ENCODE measurements at regions of chr1 and their contacts with region 1.

Region 1: GRCh38 chr1:179129702-179130473 is 48.0 kb downstream of the TOR3A start:
- DNase-seq: peak; percentile 27
- H3K4me3 Mint-ChIP-seq: peak overlapping the region; percentile 59
- H3K27ac Mint-ChIP-seq: peak overlapping the region; percentile 82
- H3K4me1 Mint-ChIP-seq: peaks cover 24% of the 10 kb centered on the region
- H3K27me3 Mint-ChIP-seq: no peaks in the 10 kb centered on the region

Region 2: DNA sequence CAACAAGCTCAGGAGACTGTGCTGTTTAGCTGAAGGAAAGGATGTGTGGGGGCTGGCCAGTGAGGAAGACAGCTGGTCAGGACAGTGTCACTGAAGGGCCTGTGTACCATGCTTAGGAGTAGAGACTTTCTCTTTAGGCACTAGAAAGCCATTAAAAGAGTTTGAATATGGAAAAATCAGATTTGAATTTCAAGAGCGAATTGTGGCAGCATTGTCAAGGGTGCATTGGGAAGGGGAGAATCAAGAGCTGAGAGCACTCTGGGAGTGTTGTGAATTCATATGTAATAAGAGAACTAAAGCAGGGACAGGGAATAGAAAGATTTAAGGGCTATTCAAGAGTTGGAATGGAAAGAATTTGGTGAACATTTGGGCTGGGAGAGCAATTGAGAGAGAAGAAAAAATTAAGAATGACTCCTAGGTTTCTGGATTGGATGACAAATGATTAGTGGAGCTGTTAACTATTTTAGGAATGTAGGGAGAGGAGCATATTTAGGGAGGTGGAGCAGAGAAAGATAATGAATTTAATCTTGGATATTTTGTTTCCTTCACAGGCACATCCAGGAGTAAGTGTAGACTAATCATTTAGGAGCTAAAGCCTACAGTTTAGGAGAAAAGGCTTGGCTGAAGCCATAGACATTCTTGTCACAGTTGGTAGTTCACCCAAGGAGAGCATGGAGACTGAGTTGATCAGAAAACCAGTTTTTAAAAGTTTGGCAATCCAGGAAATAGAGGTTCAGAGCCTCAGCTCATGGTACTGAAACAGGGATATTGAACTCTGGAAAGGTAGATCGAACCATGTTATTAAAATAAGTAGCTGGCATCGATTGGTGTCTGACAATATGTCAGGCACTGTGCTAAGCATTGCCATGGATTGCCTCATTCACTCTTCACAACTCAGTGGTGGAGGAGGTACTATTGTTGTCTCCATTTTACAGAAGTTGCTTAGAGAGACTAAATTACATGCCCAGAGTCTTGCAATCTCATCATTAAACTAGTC is 71.1 kb before region 1 on chr1:
- CTCF ChIA-PET with region 1: no interaction called
- POLR2A ChIA-PET with region 1: no interaction called
- intact Hi-C with region 1: no loop called
- DNase-seq: no peak
- H3K4me3 Mint-ChIP-seq: no peak overlapping the region
- H3K27ac Mint-ChIP-seq: no peak overlapping the region
- H3K4me1 Mint-ChIP-seq: no peaks in the 10 kb centered on the region
- H3K27me3 Mint-ChIP-seq: no peaks in the 10 kb centered on the region

Region 3: GRCh38 chr1:179142889-179143299 is 13.0 kb after region 1 on chr1:
- CTCF ChIA-PET with region 1: no interaction called
- POLR2A ChIA-PET with region 1: interaction called, 3 read pairs
- intact Hi-C with region 1: loop called (anchors 1 kb)
- DNase-seq: no peak
- H3K4me3 Mint-ChIP-seq: no peak overlapping the region
- H3K27ac Mint-ChIP-seq: no peak overlapping the region
- H3K4me1 Mint-ChIP-seq: peaks cover 26% of the 10 kb centered on the region
- H3K27me3 Mint-ChIP-seq: no peaks in the 10 kb centered on the region

Region 4: GRCh38 chr1:179322557-179322956 is 192.7 kb after region 1 on chr1:
- CTCF ChIA-PET with region 1: no interaction called
- POLR2A ChIA-PET with region 1: no interaction called
- intact Hi-C with region 1: loop called (anchors 1 kb)
- DNase-seq: no peak
- H3K4me3 Mint-ChIP-seq: no peak overlapping the region
- H3K27ac Mint-ChIP-seq: no peak overlapping the region
- H3K4me1 Mint-ChIP-seq: peaks cover 33% of the 10 kb centered on the region
- H3K27me3 Mint-ChIP-seq: no peaks in the 10 kb centered on the region

Measured in activated CD4-positive, alpha-beta memory T cell treated with anti-CD3 and anti-CD28 coated beads for 36 hours (primary cell).